ENCODE measurements at regions of chr12 and their contacts with region 1.

Region 1: DNA sequence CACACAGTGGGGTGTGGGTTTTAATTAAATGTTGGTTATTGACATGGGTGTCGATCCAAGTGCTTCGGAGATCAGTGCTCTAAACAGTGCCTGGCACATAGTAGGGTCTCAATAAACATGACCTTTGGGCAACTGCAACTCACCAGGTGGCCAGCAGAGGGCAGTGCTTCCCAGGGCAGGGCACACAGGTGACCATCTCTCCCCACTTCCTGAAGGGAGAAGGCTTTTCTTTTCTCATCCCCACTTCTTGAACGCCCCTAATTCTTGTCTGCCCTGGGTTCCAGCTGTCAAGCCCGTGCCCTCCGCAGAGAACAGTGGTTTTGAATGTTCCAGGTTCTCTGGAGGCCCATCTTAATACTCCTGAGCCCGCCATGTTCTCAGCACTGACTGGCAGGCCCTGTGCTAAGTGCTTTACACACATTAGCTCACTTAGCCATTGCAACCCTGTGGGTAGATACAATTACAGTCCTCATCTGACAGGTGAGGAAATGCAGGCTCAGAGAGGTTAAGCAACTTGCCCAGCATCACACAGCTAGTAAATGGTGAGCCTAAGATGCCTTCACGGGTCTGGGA is 16.3 kb downstream of the RAPGEF3 start:
- DNase-seq: peak; percentile 45 to 83 (median 72)
- ATAC-seq: peak; percentile 57
- H3K4me3 ChIP-seq: no peak overlapping the region
- H3K4me3 Mint-ChIP-seq: no peak overlapping the region
- H3K27ac ChIP-seq: no peak overlapping the region
- H3K27ac Mint-ChIP-seq: no peak overlapping the region
- H3K4me1 ChIP-seq: peaks cover 27% of the 10 kb centered on the region
- H3K4me1 Mint-ChIP-seq: peaks cover 32% of the 10 kb centered on the region
- H3K27me3 ChIP-seq: peaks cover 0 to 4% of the 10 kb centered on the region in 2 experiments
- H3K27me3 Mint-ChIP-seq: peaks cover 5% of the 10 kb centered on the region
- CTCF ChIP-seq: peak; percentile 98

Region 2: DNA sequence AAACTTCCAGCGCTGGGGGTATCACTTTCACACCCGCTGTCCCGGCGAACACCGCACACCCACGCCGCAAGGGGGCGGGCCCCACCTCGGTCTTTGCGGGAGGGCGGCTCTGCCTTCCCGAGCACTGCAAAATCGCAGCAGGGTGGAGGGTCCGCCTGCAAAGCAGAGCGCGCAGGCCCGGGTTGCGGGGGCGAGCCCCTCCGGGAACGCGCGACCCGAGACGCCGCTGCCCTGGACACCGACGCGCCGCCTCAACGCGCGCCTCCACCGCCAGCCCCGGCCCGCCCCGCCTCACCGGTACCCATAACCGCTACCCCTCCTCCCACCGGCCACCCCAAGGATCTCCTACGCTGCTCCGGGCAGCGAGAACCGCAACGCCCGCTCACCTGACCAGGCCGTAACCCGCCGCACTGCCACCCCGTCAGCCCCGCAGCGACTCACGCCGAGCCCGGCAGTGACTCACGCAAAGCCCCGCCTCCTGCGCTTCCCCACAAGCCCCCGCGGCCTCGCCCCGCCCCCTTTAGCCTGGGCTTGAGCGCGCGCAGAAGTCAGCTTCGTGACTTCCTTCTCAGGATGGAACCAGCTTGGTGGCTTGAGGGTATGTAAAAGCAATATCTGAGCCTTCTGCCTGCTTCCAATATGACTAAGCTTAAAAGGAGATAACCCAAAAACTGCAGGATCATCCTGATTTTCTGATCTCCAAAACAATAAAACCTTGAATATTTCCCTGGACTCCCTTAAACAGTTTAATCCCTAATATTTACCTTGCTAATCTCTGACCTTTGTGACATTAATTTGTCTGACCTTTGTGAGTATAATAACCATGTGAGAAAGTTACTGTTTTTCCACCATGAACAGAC is 36.5 kb before region 1 on chr12 and contains the start of gene RPAP3:
- CTCF ChIA-PET with region 1: interaction called, 172 read pairs
- POLR2A ChIA-PET with region 1: interaction called, 3 read pairs
- intact Hi-C with region 1: loop called in 1 of 2 experiments (anchors 1 kb)
- DNase-seq: peak; percentile 92 to 98 (median 97)
- ATAC-seq: peak; percentile 95
- H3K4me3 ChIP-seq: peak within 1 kb of the TSS; percentile 63 to 73
- H3K4me3 Mint-ChIP-seq: peak within 1 kb of the TSS; percentile 91
- H3K27ac ChIP-seq: peak within 1 kb of the TSS; percentile 67 to 88
- H3K27ac Mint-ChIP-seq: peak within 1 kb of the TSS; percentile 96
- H3K4me1 ChIP-seq: peaks cover 48% of the 10 kb centered on the region
- H3K4me1 Mint-ChIP-seq: peaks cover 64% of the 10 kb centered on the region
- H3K27me3 ChIP-seq: no peaks in the 10 kb centered on the region
- H3K27me3 Mint-ChIP-seq: no peaks in the 10 kb centered on the region
- CTCF ChIP-seq: peak; percentile 77
- total RNA-seq, gene RPAP3: 17.3 to 18.3 TPM

Region 3: DNA sequence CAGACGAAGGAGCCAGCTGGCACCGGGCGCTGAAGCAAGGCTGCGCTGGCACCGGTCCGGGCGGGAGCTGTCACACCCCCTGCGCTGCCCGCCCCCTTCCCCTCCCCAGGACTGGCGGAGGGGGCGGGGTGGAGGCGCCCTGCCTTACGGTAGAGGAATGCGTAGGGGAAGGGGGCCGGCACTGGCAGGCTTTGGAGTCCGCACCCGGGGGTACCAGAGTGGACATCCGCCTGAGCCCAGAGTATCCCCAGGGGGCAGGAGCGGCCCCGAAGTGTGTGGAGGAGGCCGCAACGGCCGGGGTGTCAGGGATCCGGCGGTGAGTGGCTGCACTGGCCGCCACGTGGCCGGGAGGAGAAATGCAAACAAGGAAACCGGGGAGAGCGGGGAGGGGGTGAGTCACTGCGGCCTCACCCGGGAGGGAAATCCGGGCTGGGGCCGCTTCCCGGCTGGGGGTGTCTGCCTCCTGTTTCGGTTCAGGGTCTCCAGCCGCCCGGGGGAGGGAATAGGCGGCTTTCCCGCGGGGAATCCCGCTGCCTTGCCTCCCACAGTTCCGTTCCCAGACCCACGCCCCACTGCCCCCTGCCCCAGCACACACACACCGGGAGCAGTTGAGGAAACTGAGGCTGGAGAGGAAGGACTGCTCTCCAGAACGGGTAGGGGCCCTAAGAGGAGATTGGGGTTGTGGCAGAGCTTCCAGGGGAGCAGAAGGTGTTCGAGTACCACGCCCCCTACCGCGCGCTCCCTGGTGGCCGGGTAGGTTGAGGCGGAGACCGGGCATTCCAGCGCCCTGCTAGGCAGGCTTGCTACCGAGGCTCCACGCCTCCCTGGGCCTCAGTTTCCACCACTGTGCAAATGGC is 16.7 kb after region 1 on chr12 and contains the start of gene RAPGEF3:
- CTCF ChIA-PET with region 1: interaction called, 201 read pairs
- POLR2A ChIA-PET with region 1: interaction called, 10 read pairs
- intact Hi-C with region 1: loop called in 1 of 2 experiments (anchors 1 kb)
- DNase-seq: peak in 8 of 9 experiments; percentile 54 to 81 (median 72)
- ATAC-seq: peak; percentile 78
- H3K4me3 ChIP-seq: peak within 1 kb of the TSS; percentile 59 to 61
- H3K4me3 Mint-ChIP-seq: peak within 1 kb of the TSS; percentile 79
- H3K27ac ChIP-seq: no peak within 1 kb of the TSS
- H3K27ac Mint-ChIP-seq: no peak within 1 kb of the TSS
- H3K4me1 ChIP-seq: peaks cover 12% of the 10 kb centered on the region
- H3K4me1 Mint-ChIP-seq: peaks cover 23% of the 10 kb centered on the region
- H3K27me3 ChIP-seq: peaks cover 0 to 6% of the 10 kb centered on the region in 2 experiments
- H3K27me3 Mint-ChIP-seq: no peaks in the 10 kb centered on the region
- CTCF ChIP-seq: peak; percentile 58
- total RNA-seq, gene RAPGEF3: 0.14 to 0.25 TPM

Region 4: DNA sequence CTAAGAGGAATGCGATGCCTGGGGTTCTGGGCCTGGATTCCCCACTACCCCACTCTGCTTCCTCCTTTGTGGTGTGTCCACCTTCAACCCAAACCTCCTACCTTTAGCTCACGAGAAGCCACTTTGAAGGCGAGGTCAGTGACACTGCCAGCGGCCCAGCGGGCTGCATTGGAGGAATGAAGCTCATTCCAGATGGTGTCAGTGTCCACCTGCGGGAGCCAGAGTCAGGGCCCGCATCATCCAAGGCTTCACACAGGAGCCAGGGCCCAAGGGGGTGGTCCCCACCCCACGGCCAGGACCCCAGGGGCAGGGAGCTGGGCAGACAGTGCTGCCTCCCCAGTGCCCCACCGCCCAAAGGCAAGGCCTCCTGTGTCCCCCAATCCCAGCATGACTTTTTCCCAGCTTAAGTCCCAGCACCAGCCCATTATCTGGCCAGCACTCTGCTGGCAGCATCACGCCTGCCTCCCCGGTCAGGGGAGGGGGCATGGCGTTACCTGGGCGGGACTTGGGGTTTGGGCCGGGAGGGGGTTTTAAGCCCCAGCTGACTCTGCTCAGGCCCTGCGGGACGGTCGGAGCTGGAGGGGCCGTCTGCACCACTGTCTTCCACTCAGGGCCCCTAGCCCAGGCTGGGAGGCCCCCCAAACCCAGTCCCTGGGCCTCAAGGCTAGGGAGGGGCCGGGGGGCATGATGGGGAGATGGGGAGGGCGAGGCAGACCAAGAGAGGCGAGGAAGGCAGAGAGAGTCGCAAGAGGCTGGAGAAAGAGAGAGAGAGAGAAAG is 47.6 kb after region 1 on chr12:
- CTCF ChIA-PET with region 1: interaction called, 26 read pairs
- POLR2A ChIA-PET with region 1: no interaction called
- intact Hi-C with region 1: no loop called
- DNase-seq: no peak
- ATAC-seq: no peak
- H3K4me3 ChIP-seq: no peak overlapping the region
- H3K4me3 Mint-ChIP-seq: no peak overlapping the region
- H3K27ac ChIP-seq: no peak overlapping the region
- H3K27ac Mint-ChIP-seq: no peak overlapping the region
- H3K4me1 ChIP-seq: no peaks in the 10 kb centered on the region
- H3K4me1 Mint-ChIP-seq: no peaks in the 10 kb centered on the region
- H3K27me3 ChIP-seq: no peaks in the 10 kb centered on the region
- H3K27me3 Mint-ChIP-seq: no peaks in the 10 kb centered on the region
- CTCF ChIP-seq: no peak

Region 5: DNA sequence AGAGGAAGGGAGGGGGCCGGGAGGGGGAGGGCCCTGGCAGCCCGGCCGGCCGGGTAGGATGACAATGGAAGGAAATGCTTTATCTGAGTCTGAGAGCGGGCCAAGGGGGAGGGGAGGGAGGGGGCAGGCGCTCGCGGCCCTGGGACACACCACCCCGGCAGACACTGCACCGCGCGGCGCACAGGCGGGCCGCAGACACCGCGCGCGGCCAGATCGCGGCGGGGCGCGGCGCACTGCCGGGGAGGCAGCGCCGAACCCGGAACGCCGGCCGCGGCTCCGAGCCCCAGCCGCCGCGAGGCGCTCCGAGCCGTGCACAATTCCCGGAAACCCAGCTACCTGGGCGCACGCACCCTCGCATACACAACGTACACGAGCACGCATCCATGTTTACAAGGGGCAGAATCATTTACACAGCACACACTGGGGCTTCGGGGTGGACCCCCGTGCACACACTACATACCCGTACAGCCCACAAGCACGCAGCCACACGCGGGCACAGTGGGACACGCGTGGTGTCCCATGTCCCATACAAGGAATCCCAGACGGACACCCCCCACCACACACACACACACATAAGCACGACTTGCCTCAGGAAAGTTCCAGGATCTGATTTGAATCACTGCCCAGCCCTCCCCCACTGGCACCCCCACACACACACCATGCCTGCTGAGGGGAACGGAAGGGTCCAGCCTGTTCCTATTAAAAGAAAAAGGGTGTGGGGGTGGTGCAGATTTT is 77.7 kb after region 1 on chr12 and contains the start of gene HDAC7:
- CTCF ChIA-PET with region 1: interaction called, 44 read pairs
- POLR2A ChIA-PET with region 1: interaction called, 3 read pairs
- intact Hi-C with region 1: no loop called
- DNase-seq: peak; percentile 39 to 85 (median 73)
- ATAC-seq: peak; percentile 51
- H3K4me3 ChIP-seq: peak within 1 kb of the TSS; percentile 78 to 83
- H3K4me3 Mint-ChIP-seq: peak within 1 kb of the TSS; percentile 95
- H3K27ac ChIP-seq: peak within 1 kb of the TSS; percentile 78 to 81
- H3K27ac Mint-ChIP-seq: peak within 1 kb of the TSS; percentile 96
- H3K4me1 ChIP-seq: peaks cover 80% of the 10 kb centered on the region
- H3K4me1 Mint-ChIP-seq: peaks cover 87% of the 10 kb centered on the region
- H3K27me3 ChIP-seq: no peaks in the 10 kb centered on the region
- H3K27me3 Mint-ChIP-seq: no peaks in the 10 kb centered on the region
- CTCF ChIP-seq: no peak
- total RNA-seq, gene HDAC7: 87.3 to 91.4 TPM

Region 6: DNA sequence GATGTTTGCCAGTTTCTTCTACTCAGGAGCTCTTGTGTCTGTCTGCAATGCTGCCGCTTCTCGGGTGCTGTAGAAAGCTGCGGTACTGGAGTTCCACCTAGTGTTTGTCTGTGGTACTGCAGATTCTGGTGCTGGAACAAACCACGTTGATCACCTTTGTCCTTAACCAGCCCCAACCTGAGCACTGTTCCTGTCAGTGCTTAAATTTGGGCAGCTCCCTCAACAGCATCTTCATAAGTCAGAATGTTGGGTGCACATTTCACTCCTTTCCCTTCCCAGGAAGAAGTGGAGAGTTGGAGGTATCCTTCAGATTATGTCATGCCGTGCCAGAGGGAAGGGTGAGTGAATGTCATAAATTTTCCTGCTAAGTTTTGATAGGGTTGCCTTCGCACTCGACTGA is 876.2 kb after region 1 on chr12:
- CTCF ChIA-PET with region 1: no interaction called
- POLR2A ChIA-PET with region 1: no interaction called
- intact Hi-C with region 1: loop called in 1 of 2 experiments (anchors 2 kb)
- DNase-seq: peak; percentile 56 to 84 (median 73)
- ATAC-seq: peak; percentile 100
- H3K4me3 ChIP-seq: no peak overlapping the region
- H3K4me3 Mint-ChIP-seq: no peak overlapping the region
- H3K27ac ChIP-seq: no peak overlapping the region
- H3K27ac Mint-ChIP-seq: no peak overlapping the region
- H3K4me1 ChIP-seq: no peaks in the 10 kb centered on the region
- H3K4me1 Mint-ChIP-seq: no peaks in the 10 kb centered on the region
- H3K27me3 ChIP-seq: no peaks in the 10 kb centered on the region
- H3K27me3 Mint-ChIP-seq: peaks cover 33% of the 10 kb centered on the region
- CTCF ChIP-seq: peak; percentile 94